Endothelial cell of umbilical vein (primary cell): ENCODE measurements at regions of chr6 and their contacts with region 1.

Region 1: GRCh38 chr6:150079604-150080003 is 10.7 kb upstream of the ULBP3 start:
- DNase-seq: no peak
- H3K4me3 ChIP-seq: no peak overlapping the region
- H3K27ac ChIP-seq: no peak overlapping the region
- H3K4me1 ChIP-seq: no peaks in the 10 kb centered on the region
- H3K27me3 ChIP-seq: peaks cover 11 to 12% of the 10 kb centered on the region in 2 experiments
- CTCF ChIP-seq: no peak
- POLR2A ChIP-seq: no peak

Region 2: GRCh38 chr6:149895833-149896271 is 183.8 kb before region 1 on chr6:
- CTCF ChIA-PET with region 1: no interaction called
- POLR2A ChIA-PET with region 1: no interaction called
- dilution Hi-C with region 1: no loop called
- intact Hi-C with region 1: no loop called
- DNase-seq: peak; percentile 58
- H3K4me3 ChIP-seq: no peak overlapping the region
- H3K27ac ChIP-seq: no peak overlapping the region
- H3K4me1 ChIP-seq: peaks cover 17% of the 10 kb centered on the region
- H3K27me3 ChIP-seq: peaks cover 0 to 3% of the 10 kb centered on the region in 2 experiments
- CTCF ChIP-seq: no peak
- POLR2A ChIP-seq: no peak

Region 3: GRCh38 chr6:150055131-150055530 is 24.5 kb before region 1 on chr6:
- CTCF ChIA-PET with region 1: interaction called, 18 read pairs
- POLR2A ChIA-PET with region 1: no interaction called
- dilution Hi-C with region 1: no loop called
- intact Hi-C with region 1: no loop called
- DNase-seq: no peak
- H3K4me3 ChIP-seq: no peak overlapping the region
- H3K27ac ChIP-seq: no peak overlapping the region
- H3K4me1 ChIP-seq: no peaks in the 10 kb centered on the region
- H3K27me3 ChIP-seq: peaks cover 6 to 13% of the 10 kb centered on the region in 2 experiments
- CTCF ChIP-seq: no peak
- POLR2A ChIP-seq: no peak

Region 4: DNA sequence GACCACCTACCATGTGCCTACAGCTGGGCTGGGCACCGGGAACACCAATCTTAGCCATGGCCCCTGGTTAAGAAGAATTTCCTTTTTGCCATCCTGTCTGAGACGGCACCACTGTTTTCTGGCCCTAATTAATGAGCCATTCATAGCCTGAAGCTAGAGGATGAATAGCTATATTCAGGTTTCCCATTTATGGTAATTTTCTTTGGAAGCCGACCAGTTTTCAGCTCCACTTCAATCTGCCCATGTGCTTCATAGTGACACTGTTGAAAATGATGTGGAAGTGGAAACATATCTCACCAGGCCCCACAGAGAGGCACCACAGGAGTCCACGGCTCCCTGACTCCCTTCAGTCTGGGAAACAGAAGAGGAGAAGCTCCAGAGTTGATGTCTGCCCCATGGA is 11.9 kb after region 1 on chr6:
- CTCF ChIA-PET with region 1: interaction called, 43 read pairs
- POLR2A ChIA-PET with region 1: no interaction called
- dilution Hi-C with region 1: no loop called
- intact Hi-C with region 1: no loop called
- DNase-seq: no peak
- H3K4me3 ChIP-seq: no peak overlapping the region
- H3K27ac ChIP-seq: no peak overlapping the region
- H3K4me1 ChIP-seq: no peaks in the 10 kb centered on the region
- H3K27me3 ChIP-seq: peaks cover 6% of the 10 kb centered on the region in 2 experiments
- CTCF ChIP-seq: no peak
- POLR2A ChIP-seq: no peak

Region 5: DNA sequence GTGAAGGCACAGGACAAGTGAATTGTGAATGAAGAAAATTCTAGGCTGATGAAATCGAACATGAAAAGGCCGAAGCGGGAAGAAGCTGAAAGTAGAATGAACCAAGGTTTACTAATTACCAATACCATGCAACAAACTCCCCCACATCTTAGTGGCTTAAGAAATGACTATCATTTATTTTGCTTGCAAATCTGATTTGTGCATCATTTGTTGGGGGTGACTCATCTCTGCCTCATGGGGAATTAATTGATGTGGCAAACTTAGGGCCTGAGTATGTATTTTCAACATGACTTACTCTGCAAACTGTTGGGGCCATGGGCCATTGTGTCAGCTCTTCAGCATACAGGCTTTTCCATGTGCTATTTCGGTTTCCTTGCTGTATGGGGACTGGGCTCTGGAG is 90.0 kb after region 1 on chr6:
- CTCF ChIA-PET with region 1: no interaction called
- POLR2A ChIA-PET with region 1: no interaction called
- dilution Hi-C with region 1: no loop called
- intact Hi-C with region 1: no loop called
- DNase-seq: no peak
- H3K4me3 ChIP-seq: no peak overlapping the region
- H3K27ac ChIP-seq: no peak overlapping the region
- H3K4me1 ChIP-seq: no peaks in the 10 kb centered on the region
- H3K27me3 ChIP-seq: no peaks in the 10 kb centered on the region
- CTCF ChIP-seq: no peak
- POLR2A ChIP-seq: no peak

Region 6: DNA sequence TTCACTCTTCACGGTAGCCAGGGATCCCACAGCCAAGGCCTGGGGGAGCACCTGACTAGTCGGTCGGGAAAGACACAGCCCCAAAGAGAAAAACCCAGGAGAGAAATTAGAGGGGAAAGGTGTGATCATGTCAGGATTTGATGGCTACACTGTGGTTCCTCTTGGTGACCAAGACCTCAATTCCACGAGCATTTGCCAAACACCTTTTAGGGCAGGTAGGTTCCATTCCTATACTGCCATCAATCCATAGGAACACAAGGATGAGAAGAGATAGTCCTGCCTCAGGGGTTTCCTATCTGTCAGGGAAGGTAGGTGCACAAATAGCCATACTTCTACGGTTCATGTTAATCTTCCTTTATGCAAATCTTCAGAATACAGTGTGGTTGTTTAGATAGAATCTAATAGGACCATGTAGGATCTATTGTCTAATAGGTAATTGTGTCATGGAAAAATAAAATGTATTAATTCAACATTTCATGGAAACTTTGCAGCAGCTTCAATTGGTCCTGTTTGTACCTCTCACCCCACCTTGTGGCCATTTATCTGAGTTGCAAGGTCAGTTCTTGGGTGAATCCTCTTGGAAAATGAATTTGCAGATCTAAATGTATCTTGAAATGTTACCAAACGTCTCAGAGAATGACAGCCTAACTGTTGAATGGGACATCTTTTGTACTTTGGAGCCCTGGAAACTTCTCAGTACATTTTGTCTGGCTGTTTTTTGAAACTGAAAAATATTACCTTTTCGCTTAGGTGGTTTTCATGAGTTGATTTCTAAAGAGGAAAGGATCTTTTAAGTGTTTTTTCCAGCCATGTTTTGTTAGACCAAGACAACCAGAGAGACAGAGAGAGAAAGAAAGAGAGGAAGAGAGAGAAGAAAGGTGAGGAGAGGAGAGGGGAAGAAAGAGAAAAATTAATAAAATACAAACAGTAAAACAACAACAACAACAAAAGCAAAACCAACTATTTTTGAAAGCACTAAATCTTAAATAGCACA is 255.5 kb after region 1 on chr6:
- CTCF ChIA-PET with region 1: interaction called, 130 read pairs
- POLR2A ChIA-PET with region 1: no interaction called
- dilution Hi-C with region 1: no loop called
- intact Hi-C with region 1: loop called (anchors 1 kb)
- DNase-seq: peak; percentile 65
- H3K4me3 ChIP-seq: no peak overlapping the region
- H3K27ac ChIP-seq: no peak overlapping the region
- H3K4me1 ChIP-seq: no peaks in the 10 kb centered on the region
- H3K27me3 ChIP-seq: peaks cover 3 to 12% of the 10 kb centered on the region in 2 experiments
- CTCF ChIP-seq: peak; percentile 61 to 62
- POLR2A ChIP-seq: no peak